Activated CD4-positive, alpha-beta T cell treated with anti-CD3 and anti-CD28 coated beads for 36 hours (primary cell): ENCODE measurements at regions of chr5 and their contacts with region 1.

Region 1: GRCh38 chr5:142845954-142846805 is 76.0 kb downstream of the ARHGAP26 start:
- DNase-seq: no peak
- ATAC-seq: no peak
- H3K4me3 Mint-ChIP-seq: no peak overlapping the region
- H3K27ac Mint-ChIP-seq: peak overlapping the region; percentile 15
- H3K4me1 Mint-ChIP-seq: peaks cover 26% of the 10 kb centered on the region
- H3K27me3 Mint-ChIP-seq: no peaks in the 10 kb centered on the region

Region 2: GRCh38 chr5:142946547-142947426 is 100.6 kb after region 1 on chr5:
- CTCF ChIA-PET with region 1: no interaction called
- POLR2A ChIA-PET with region 1: interaction called, 10 read pairs
- intact Hi-C with region 1: no loop called
- DNase-seq: no peak
- ATAC-seq: no peak
- H3K4me3 Mint-ChIP-seq: no peak overlapping the region
- H3K27ac Mint-ChIP-seq: no peak overlapping the region
- H3K4me1 Mint-ChIP-seq: peaks cover 5% of the 10 kb centered on the region
- H3K27me3 Mint-ChIP-seq: no peaks in the 10 kb centered on the region

Region 3: GRCh38 chr5:143033535-143034250 is 187.5 kb after region 1 on chr5:
- CTCF ChIA-PET with region 1: no interaction called
- POLR2A ChIA-PET with region 1: no interaction called
- intact Hi-C with region 1: no loop called
- DNase-seq: no peak
- ATAC-seq: no peak
- H3K4me3 Mint-ChIP-seq: no peak overlapping the region
- H3K27ac Mint-ChIP-seq: no peak overlapping the region
- H3K4me1 Mint-ChIP-seq: peaks cover 61% of the 10 kb centered on the region
- H3K27me3 Mint-ChIP-seq: no peaks in the 10 kb centered on the region